MCF 10A (cell line): ENCODE measurements at regions of chr15 and their contacts with region 1.

Region 1: DNA sequence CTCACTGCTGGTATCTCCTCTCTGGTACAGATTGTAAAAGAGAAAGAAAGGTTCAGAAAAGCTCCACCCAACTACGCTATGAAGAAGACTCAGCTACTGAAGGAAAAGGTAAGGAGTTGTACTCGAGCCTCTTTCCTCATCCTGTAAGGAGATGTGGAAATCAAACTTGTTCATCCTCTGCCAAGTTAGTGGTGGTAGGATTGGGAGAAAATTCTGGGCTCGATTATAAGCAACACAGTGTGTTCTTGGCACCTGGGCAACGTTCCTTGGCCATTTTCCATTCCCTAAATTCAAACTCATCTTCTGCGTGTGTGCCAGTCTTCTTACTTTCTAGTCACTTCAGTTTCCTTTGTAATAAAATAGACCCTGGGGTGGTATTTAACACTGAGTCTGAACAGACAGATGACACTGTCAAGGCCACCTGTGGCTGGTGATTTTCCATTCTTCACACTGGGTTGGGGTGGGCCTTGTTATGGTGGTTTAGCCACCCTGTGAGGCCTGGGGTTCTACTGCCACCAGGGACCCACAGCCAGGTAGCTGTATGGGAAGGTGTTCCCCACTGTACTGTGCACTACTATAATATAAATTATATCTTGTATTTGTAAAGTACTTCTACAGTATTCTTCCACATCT is 17.1 kb upstream of the ITPKA start:
- DNase-seq: peak; percentile 89
- H3K4me3 Mint-ChIP-seq: peak overlapping the region; percentile 17
- H3K27ac Mint-ChIP-seq: peak overlapping the region; percentile 92
- H3K4me1 Mint-ChIP-seq: peaks cover 18% of the 10 kb centered on the region
- H3K27me3 Mint-ChIP-seq: no peaks in the 10 kb centered on the region
- CTCF ChIP-seq: no peak

Region 2: GRCh38 chr15:41215708-41216107 is 260.8 kb before region 1 on chr15:
- CTCF ChIA-PET with region 1: no interaction called
- POLR2A ChIA-PET with region 1: no interaction called
- intact Hi-C with region 1: no loop called
- DNase-seq: no peak
- H3K4me3 Mint-ChIP-seq: no peak overlapping the region
- H3K27ac Mint-ChIP-seq: no peak overlapping the region
- H3K4me1 Mint-ChIP-seq: peaks cover 6% of the 10 kb centered on the region
- H3K27me3 Mint-ChIP-seq: no peaks in the 10 kb centered on the region
- CTCF ChIP-seq: no peak

Region 3: GRCh38 chr15:41429003-41429890 is 47.3 kb before region 1 on chr15:
- CTCF ChIA-PET with region 1: no interaction called
- POLR2A ChIA-PET with region 1: no interaction called
- intact Hi-C with region 1: no loop called
- DNase-seq: no peak
- H3K4me3 Mint-ChIP-seq: no peak overlapping the region
- H3K27ac Mint-ChIP-seq: no peak overlapping the region
- H3K4me1 Mint-ChIP-seq: peaks cover 13% of the 10 kb centered on the region
- H3K27me3 Mint-ChIP-seq: no peaks in the 10 kb centered on the region
- CTCF ChIP-seq: no peak

Region 4: GRCh38 chr15:41490355-41490754 is 13.8 kb after region 1 on chr15:
- CTCF ChIA-PET with region 1: interaction called, 3 read pairs
- POLR2A ChIA-PET with region 1: interaction called, 7 read pairs
- intact Hi-C with region 1: loop called (anchors 2 kb)
- DNase-seq: peak; percentile 90
- H3K4me3 Mint-ChIP-seq: no peak overlapping the region
- H3K27ac Mint-ChIP-seq: peak overlapping the region; percentile 21
- H3K4me1 Mint-ChIP-seq: peaks cover 21% of the 10 kb centered on the region
- H3K27me3 Mint-ChIP-seq: no peaks in the 10 kb centered on the region
- CTCF ChIP-seq: no peak

Region 5: GRCh38 chr15:41506796-41507341 is 30.3 kb after region 1 on chr15:
- CTCF ChIA-PET with region 1: interaction called, 4 read pairs
- POLR2A ChIA-PET with region 1: interaction called, 5 read pairs
- intact Hi-C with region 1: loop called (anchors 1 kb)
- DNase-seq: peak; percentile 31
- H3K4me3 Mint-ChIP-seq: no peak overlapping the region
- H3K27ac Mint-ChIP-seq: no peak overlapping the region
- H3K4me1 Mint-ChIP-seq: peaks cover 7% of the 10 kb centered on the region
- H3K27me3 Mint-ChIP-seq: no peaks in the 10 kb centered on the region
- CTCF ChIP-seq: peak; percentile 12

Region 6: GRCh38 chr15:41544650-41545015 is 68.1 kb after region 1 on chr15:
- CTCF ChIA-PET with region 1: no interaction called
- POLR2A ChIA-PET with region 1: interaction called, 3 read pairs
- intact Hi-C with region 1: loop called (anchors 1 kb)
- DNase-seq: peak; percentile 14
- H3K4me3 Mint-ChIP-seq: peak overlapping the region; percentile 87
- H3K27ac Mint-ChIP-seq: peak overlapping the region; percentile 90
- H3K4me1 Mint-ChIP-seq: peaks cover 12% of the 10 kb centered on the region
- H3K27me3 Mint-ChIP-seq: no peaks in the 10 kb centered on the region
- CTCF ChIP-seq: no peak

Region 7: DNA sequence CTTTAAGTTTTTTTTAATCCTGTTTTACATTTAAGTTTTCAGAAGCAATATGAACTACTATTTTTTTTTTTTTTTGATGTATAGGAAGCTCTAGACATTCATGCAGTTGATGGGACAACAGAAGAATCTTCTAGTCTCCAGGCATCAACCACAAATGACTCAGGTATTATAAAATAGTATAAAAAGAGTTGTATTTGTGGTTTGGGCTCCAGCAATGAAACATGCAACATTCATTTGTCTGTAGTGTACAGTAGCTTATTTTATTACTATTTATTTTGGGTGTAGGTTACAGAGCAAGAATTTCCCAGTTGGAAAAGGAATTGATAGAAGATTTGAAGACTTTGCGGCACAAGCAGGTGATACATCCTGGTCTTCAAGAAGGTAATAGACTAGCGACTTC is 222.2 kb after region 1 on chr15:
- CTCF ChIA-PET with region 1: no interaction called
- POLR2A ChIA-PET with region 1: no interaction called
- intact Hi-C with region 1: no loop called
- DNase-seq: peak; percentile 11
- H3K4me3 Mint-ChIP-seq: no peak overlapping the region
- H3K27ac Mint-ChIP-seq: no peak overlapping the region
- H3K4me1 Mint-ChIP-seq: peaks cover 6% of the 10 kb centered on the region
- H3K27me3 Mint-ChIP-seq: no peaks in the 10 kb centered on the region
- CTCF ChIP-seq: no peak

Region 8: DNA sequence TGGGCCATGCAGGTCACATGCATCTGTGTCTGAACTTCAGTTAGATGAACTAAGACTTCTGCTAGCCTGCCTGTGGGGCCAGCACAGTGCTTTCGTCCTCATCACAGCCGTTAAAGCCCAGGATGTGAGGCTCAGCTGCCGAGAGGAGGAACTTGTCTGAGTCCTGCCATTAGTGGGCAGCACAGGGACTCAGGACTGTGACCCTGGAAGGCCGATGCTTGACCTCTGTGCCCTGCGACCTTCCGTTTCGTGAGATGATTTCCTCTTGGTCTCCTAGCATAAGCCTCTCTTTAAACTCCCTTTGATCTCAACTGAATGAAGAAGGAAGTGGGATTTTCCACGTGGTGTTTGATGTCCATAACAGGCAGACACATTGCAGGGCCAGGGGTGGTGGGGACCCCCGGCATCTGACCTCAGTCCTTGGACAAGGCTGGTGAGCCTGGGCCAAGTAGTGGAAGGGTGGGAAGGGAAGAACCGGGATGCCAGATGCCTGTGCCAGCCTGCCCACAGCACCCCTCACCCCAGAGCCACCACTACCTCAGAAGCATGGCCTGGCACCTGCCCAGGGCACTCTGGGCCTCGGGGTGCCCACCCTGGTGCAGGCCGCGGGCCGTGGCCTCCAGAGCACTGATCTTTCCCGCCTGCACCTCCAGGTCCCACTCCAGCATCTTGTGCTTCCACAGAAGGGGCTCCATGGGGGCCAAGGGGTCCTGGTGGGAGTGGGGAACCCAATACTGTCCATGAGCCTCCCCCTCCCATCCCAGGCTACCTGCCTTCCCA is 383.7 kb after region 1 on chr15:
- CTCF ChIA-PET with region 1: no interaction called
- POLR2A ChIA-PET with region 1: no interaction called
- intact Hi-C with region 1: no loop called
- DNase-seq: no peak
- H3K4me3 Mint-ChIP-seq: no peak overlapping the region
- H3K27ac Mint-ChIP-seq: no peak overlapping the region
- H3K4me1 Mint-ChIP-seq: no peaks in the 10 kb centered on the region
- H3K27me3 Mint-ChIP-seq: no peaks in the 10 kb centered on the region
- CTCF ChIP-seq: no peak